CD4-positive, alpha-beta memory T cell (primary cell): ENCODE measurements at regions of chr19 and their contacts with region 1.

Region 1: GRCh38 chr19:17859533-17860330 is at the start of gene RPL18A:
- DNase-seq: peak; percentile 96 to 100 (median 99)
- H3K4me3 ChIP-seq: peak within 1 kb of the TSS; percentile 91 to 100
- H3K4me3 Mint-ChIP-seq: peak within 1 kb of the TSS; percentile 98 to 100 (median 100)
- H3K27ac ChIP-seq: peak within 1 kb of the TSS; percentile 79
- H3K27ac Mint-ChIP-seq: peak within 1 kb of the TSS; percentile 88 to 100 (median 98)
- H3K4me1 ChIP-seq: peaks cover 36% of the 10 kb centered on the region
- H3K4me1 Mint-ChIP-seq: peaks cover 21 to 46% (median 29%) of the 10 kb centered on the region in 4 donors
- H3K27me3 ChIP-seq: no peaks in the 10 kb centered on the region
- H3K27me3 Mint-ChIP-seq: no peaks in the 10 kb centered on the region
- total RNA-seq, gene RPL18A: 3,084 to 3,117 TPM

Region 2: GRCh38 chr19:17703824-17704463 is 155.8 kb before region 1 on chr19:
- CTCF ChIA-PET with region 1: interaction called, 108 read pairs
- POLR2A ChIA-PET with region 1: interaction called, 4 read pairs
- intact Hi-C with region 1: loop called (anchors 1 kb)
- DNase-seq: peak; percentile 62 to 71 (median 66)
- H3K4me3 ChIP-seq: no peak overlapping the region
- H3K4me3 Mint-ChIP-seq: no peak overlapping the region
- H3K27ac ChIP-seq: no peak overlapping the region
- H3K27ac Mint-ChIP-seq: peak overlapping the region in 2 of 7 donors; percentile 5 to 78
- H3K4me1 ChIP-seq: no peaks in the 10 kb centered on the region
- H3K4me1 Mint-ChIP-seq: peaks cover 0 to 2% (median 0%) of the 10 kb centered on the region in 4 donors
- H3K27me3 ChIP-seq: no peaks in the 10 kb centered on the region
- H3K27me3 Mint-ChIP-seq: peaks cover 3 to 10% of the 10 kb centered on the region in 2 donors

Region 3: GRCh38 chr19:17754634-17755442 is 104.9 kb before region 1 on chr19:
- CTCF ChIA-PET with region 1: interaction called, 10 read pairs
- POLR2A ChIA-PET with region 1: interaction called, 8 read pairs
- intact Hi-C with region 1: loop called (anchors 1 kb)
- DNase-seq: no peak
- H3K4me3 ChIP-seq: no peak overlapping the region
- H3K4me3 Mint-ChIP-seq: peak overlapping the region in 4 of 8 donors; percentile 26 to 58 (median 38)
- H3K27ac ChIP-seq: peak overlapping the region; percentile 21
- H3K27ac Mint-ChIP-seq: peak overlapping the region; percentile 78 to 91 (median 82)
- H3K4me1 ChIP-seq: peaks cover 55% of the 10 kb centered on the region
- H3K4me1 Mint-ChIP-seq: peaks cover 21 to 63% (median 42%) of the 10 kb centered on the region in 4 donors
- H3K27me3 ChIP-seq: no peaks in the 10 kb centered on the region
- H3K27me3 Mint-ChIP-seq: no peaks in the 10 kb centered on the region

Region 4: GRCh38 chr19:17803264-17803922 is 56.3 kb before region 1 on chr19:
- CTCF ChIA-PET with region 1: interaction called, 24 read pairs
- POLR2A ChIA-PET with region 1: interaction called, 10 read pairs
- intact Hi-C with region 1: no loop called
- DNase-seq: peak; percentile 47 to 63 (median 57)
- H3K4me3 ChIP-seq: peak overlapping the region in 1 of 2 donors; percentile 28
- H3K4me3 Mint-ChIP-seq: peak overlapping the region; percentile 34 to 86 (median 78)
- H3K27ac ChIP-seq: no peak overlapping the region
- H3K27ac Mint-ChIP-seq: peak overlapping the region; percentile 80 to 94 (median 88)
- H3K4me1 ChIP-seq: peaks cover 43% of the 10 kb centered on the region
- H3K4me1 Mint-ChIP-seq: peaks cover 19 to 52% (median 32%) of the 10 kb centered on the region in 4 donors
- H3K27me3 ChIP-seq: no peaks in the 10 kb centered on the region
- H3K27me3 Mint-ChIP-seq: no peaks in the 10 kb centered on the region

Region 5: GRCh38 chr19:17932485-17933338 is 73.0 kb after region 1 on chr19 and contains the start of gene CCDC124:
- CTCF ChIA-PET with region 1: interaction called, 306 read pairs
- POLR2A ChIA-PET with region 1: interaction called, 340 read pairs
- intact Hi-C with region 1: no loop called
- DNase-seq: peak; percentile 93 to 95 (median 95)
- H3K4me3 ChIP-seq: peak within 1 kb of the TSS; percentile 63 to 73
- H3K4me3 Mint-ChIP-seq: peak within 1 kb of the TSS; percentile 89 to 98 (median 92)
- H3K27ac ChIP-seq: peak within 1 kb of the TSS; percentile 96
- H3K27ac Mint-ChIP-seq: peak within 1 kb of the TSS; percentile 92 to 99 (median 98)
- H3K4me1 ChIP-seq: peaks cover 19% of the 10 kb centered on the region
- H3K4me1 Mint-ChIP-seq: peaks cover 7 to 24% (median 14%) of the 10 kb centered on the region in 4 donors
- H3K27me3 ChIP-seq: no peaks in the 10 kb centered on the region
- H3K27me3 Mint-ChIP-seq: no peaks in the 10 kb centered on the region
- total RNA-seq, gene CCDC124: 30.0 to 34.2 TPM

Region 6: DNA sequence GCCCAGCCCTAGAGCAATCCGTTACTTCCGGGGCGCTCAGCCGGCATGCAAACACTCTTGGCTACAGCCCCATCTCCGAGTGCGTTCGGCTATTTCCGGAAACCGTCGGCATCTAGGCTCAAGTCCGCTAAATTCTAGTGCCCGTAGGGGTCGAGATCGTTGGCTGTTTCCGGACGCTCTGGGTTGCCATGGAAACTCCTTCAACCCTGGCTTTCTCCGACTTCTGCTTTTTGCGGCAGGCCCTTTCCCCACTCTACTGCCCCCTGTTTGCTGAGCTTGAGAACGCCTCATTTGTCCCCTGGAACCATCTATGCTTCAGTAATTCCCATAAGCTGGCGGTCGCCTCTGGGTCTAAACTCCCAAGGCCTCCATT is 292.7 kb after region 1 on chr19:
- CTCF ChIA-PET with region 1: no interaction called
- POLR2A ChIA-PET with region 1: no interaction called
- intact Hi-C with region 1: loop called (anchors 1 kb)
- DNase-seq: peak; percentile 96 to 99 (median 96)
- H3K4me3 ChIP-seq: peak overlapping the region; percentile 74 to 79
- H3K4me3 Mint-ChIP-seq: peak overlapping the region; percentile 84 to 95 (median 91)
- H3K27ac ChIP-seq: peak overlapping the region; percentile 74
- H3K27ac Mint-ChIP-seq: peak overlapping the region; percentile 88 to 99 (median 97)
- H3K4me1 ChIP-seq: peaks cover 28% of the 10 kb centered on the region
- H3K4me1 Mint-ChIP-seq: peaks cover 14 to 38% (median 21%) of the 10 kb centered on the region in 4 donors
- H3K27me3 ChIP-seq: no peaks in the 10 kb centered on the region
- H3K27me3 Mint-ChIP-seq: no peaks in the 10 kb centered on the region